Posterior cingulate gyrus (tissue), 11 donors: ENCODE measurements at regions of chr14 and their contacts with region 1.

Region 1: GRCh38 chr14:50599700-50600444 is 39.9 kb downstream of the ATL1 start:
- DNase-seq: no peak

Region 2: DNA sequence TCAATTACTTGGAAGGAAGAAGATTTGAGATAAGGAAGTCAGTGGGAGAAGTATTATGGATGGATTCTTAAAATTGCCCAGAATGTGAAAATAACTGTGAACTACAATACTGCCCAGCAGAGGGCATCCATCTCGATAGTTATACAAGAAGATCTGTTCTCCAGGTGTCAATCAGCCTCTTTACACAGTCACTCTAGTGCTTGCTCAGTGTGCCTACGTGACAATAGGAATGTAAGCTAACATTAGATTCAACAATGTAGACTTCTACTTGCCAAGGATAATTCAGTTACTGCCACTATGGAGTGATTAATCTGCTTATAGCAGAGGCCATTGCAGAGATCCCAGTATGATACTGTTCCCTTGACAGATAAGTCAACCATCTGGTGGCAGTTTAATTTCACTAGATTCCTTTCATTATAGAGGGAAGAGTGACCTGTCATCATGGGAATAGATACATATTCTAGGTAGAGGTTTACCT is 56.9 kb before region 1 on chr14:
- intact Hi-C with region 1: no loop called
- DNase-seq: peak in 1 of 10 donors; percentile 35

Region 3: GRCh38 chr14:50714450-50715073 is 114.7 kb after region 1 on chr14:
- intact Hi-C with region 1: loop called (anchors 5 kb)
- DNase-seq: no peak